HEK293T (cell line): ENCODE measurements at regions of chr3 and their contacts with region 1.

Region 1: DNA sequence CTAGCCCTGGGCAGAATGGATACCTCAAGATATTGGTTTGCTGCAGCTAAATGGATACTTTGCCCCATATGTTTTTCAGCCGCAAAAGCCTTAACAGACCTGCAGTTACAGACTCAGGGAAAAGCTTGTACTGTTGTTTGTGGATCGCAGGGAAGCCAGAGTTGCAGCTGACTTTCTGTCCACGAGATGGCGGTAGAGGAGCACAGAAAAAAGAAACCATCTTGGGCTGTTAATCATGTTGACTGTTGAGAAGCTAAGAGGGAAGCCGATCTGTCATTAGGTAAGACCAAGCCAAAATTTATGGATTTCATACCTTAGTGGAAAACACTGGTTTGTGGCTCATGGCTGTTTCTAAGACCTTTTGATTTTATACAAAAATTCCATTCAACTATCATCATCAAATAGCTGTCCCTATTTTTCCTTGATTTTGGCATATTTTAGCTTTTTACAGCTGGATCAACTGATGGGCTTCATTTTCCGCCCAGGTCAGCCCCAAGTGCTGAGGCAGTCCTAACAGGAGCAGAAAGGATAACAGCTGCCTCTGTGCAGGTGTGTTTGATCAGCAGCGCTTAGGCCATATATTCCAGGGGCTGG is 205.7 kb upstream of the ZPLD1 start:
- DNase-seq: peak; percentile 66

Region 2: GRCh38 chr3:101809178-101810021 is 419.8 kb before region 1 on chr3:
- CTCF ChIA-PET with region 1: interaction called, 16 read pairs
- POLR2A ChIA-PET with region 1: interaction called, 3 read pairs
- DNase-seq: peak; percentile 35

Region 3: GRCh38 chr3:102258666-102259227 is 29.6 kb after region 1 on chr3:
- CTCF ChIA-PET with region 1: no interaction called
- POLR2A ChIA-PET with region 1: no interaction called
- DNase-seq: no peak

Region 4: DNA sequence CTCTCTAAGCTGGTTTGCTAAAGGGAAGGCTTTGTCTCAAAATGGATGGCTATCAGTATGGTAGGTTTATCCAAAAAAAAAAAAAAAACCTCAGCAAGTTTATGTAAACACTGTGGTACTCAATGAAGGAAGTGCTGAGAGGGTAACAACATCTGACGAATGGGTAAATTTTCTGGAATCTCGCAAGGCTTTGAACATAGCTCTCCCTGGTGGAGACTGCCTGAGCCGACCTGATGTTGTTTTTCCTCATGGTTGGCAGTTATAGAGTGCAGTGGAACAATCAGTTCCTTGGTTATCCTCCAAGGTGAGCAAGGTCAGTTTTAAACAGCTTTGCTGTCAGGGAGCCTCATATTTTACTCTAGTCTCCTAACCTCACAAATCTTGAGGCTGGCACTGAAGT is 300.3 kb after region 1 on chr3:
- CTCF ChIA-PET with region 1: interaction called, 25 read pairs
- POLR2A ChIA-PET with region 1: no interaction called
- DNase-seq: peak; percentile 41

Region 5: GRCh38 chr3:102536456-102536855 is 307.3 kb after region 1 on chr3:
- CTCF ChIA-PET with region 1: interaction called, 62 read pairs
- POLR2A ChIA-PET with region 1: no interaction called
- DNase-seq: peak; percentile 45

Region 6: GRCh38 chr3:102741108-102741507 is 511.9 kb after region 1 on chr3:
- CTCF ChIA-PET with region 1: interaction called, 11 read pairs
- POLR2A ChIA-PET with region 1: no interaction called
- DNase-seq: peak; percentile 9